Activated CD4-positive, alpha-beta memory T cell treated with anti-CD3 and anti-CD28 coated beads for 36 hours (primary cell): ENCODE measurements at regions of chr11 and their contacts with region 1.

Region 1: DNA sequence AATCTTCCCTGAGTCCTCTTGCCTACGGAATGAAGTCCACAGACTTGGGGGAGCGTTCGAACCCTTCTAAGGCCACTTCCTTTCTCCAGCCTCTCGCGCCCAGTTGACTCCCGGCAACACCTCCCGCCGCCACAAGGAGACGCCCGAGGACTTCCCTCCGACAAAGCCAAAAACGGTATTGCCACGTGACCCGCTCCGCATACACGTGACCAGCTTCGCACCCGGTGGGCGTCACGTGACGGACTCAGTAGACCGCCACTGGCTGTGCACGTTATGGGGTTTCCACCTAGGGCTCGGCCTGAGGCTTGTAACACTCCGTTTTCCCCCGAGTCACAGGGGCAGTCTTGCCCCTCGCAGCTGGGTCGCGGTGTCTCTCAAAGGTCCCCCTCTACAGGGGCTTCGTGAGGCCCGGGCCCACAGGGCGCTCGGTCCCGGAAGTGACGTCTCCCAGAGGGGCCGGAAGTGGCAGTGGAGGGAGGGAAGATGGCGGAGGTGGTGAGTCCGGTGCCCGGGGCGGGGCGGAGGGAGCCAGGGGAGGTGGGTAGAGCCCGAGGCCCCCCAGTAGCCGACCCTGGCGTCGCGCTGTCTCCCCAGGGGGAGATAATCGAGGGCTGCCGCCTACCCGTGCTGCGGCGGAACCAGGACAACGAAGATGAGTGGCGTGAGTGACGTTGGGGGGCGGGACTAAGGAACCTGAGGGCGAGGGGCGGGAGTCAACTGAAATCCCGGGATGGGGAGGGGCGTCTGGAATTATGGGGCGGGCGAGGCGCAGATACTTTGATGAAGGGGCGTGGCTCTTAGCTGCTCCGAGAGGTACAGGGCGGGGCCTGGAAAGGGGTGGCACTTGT is at the start of gene KAT5:
- DNase-seq: peak; percentile 99
- H3K4me3 Mint-ChIP-seq: peak within 1 kb of the TSS; percentile 90
- H3K27ac Mint-ChIP-seq: peak within 1 kb of the TSS; percentile 97
- H3K4me1 Mint-ChIP-seq: peaks cover 27% of the 10 kb centered on the region
- H3K27me3 Mint-ChIP-seq: no peaks in the 10 kb centered on the region
- total RNA-seq, gene KAT5: 55.9 to 61.6 TPM

Region 2: DNA sequence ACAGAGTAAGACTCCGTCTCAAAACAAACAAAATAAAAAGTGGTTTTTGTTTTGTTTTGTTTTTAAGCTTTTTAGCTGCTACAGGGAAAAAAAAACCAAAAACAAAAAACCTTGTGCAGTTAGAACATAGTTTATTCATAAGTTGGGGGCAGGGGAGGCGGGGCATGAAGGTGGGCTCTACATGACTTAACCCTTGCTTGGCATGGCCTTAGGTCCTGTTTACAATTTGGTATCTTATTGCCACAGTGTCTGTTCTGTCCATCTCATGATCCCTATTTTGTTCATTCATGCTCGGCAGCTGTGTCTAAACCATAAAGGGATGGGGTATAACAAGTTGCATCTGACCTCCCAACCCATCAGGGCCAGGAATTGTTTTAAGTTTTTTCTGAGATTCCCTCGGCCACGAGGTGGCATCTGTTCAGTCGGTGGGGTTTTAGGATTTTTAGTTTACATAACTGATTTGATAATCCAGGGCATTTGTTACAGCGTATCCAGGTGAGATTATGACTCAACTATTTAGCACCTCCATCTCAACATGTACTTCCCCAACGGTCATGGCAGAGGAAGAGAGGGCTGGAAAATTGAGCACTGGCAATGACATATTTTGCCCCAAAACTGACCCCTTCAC is 61.9 kb after region 1 on chr11:
- CTCF ChIA-PET with region 1: interaction called, 72 read pairs
- POLR2A ChIA-PET with region 1: no interaction called
- intact Hi-C with region 1: loop called (anchors 2 kb)
- DNase-seq: no peak
- H3K4me3 Mint-ChIP-seq: no peak overlapping the region
- H3K27ac Mint-ChIP-seq: no peak overlapping the region
- H3K4me1 Mint-ChIP-seq: peaks cover 15% of the 10 kb centered on the region
- H3K27me3 Mint-ChIP-seq: no peaks in the 10 kb centered on the region

Region 3: GRCh38 chr11:65850831-65851811 is 139.1 kb after region 1 on chr11:
- CTCF ChIA-PET with region 1: interaction called, 14 read pairs
- POLR2A ChIA-PET with region 1: no interaction called
- intact Hi-C with region 1: no loop called
- DNase-seq: peak; percentile 24
- H3K4me3 Mint-ChIP-seq: no peak overlapping the region
- H3K27ac Mint-ChIP-seq: no peak overlapping the region
- H3K4me1 Mint-ChIP-seq: peaks cover 22% of the 10 kb centered on the region
- H3K27me3 Mint-ChIP-seq: no peaks in the 10 kb centered on the region

Region 4: GRCh38 chr11:65988791-65989592 is 277.0 kb after region 1 on chr11:
- CTCF ChIA-PET with region 1: interaction called, 7 read pairs
- POLR2A ChIA-PET with region 1: no interaction called
- intact Hi-C with region 1: loop called (anchors 1 kb)
- DNase-seq: peak; percentile 95
- H3K4me3 Mint-ChIP-seq: no peak overlapping the region
- H3K27ac Mint-ChIP-seq: peak overlapping the region; percentile 74
- H3K4me1 Mint-ChIP-seq: peaks cover 4% of the 10 kb centered on the region
- H3K27me3 Mint-ChIP-seq: no peaks in the 10 kb centered on the region

Region 5: DNA sequence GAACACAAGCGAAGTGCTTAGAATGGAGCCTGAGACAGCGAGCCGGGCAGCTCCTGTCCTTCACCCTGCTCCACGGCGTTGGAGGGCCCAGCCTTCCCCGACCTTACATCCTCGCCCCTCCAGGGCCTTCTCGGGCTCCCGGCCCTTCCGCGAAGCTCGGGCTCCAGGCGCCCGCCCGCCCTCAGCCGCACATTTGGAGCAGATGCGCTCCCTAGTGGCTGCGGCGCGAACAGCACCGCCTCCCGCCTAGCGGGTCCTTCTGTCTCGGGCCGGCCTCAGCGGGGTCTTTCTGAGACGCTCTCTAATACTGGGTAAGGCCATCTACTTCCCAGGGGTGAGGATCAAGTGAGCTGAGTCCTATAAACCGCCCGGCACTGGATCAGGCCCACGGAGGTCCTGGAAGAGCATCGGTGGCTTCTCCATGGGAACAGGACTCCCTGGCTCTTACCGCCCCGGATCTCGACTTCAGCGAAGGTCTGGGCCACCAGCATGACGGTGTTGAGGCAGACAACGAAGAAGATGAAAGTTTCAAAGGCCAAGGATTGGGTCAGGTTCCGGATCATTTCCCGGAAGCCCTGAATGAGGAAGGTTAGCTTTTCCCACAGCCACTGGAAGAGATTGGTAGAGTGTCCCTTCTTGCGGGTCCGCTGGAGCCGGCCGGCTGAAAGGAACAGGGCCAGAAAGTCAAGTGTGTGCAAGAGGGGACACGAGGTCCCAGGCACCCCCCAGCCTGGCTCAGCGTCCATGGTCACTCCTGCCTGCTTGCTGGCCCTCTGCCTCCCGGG is 310.6 kb after region 1 on chr11:
- CTCF ChIA-PET with region 1: interaction called, 11 read pairs
- POLR2A ChIA-PET with region 1: interaction called, 3 read pairs
- intact Hi-C with region 1: no loop called
- DNase-seq: peak; percentile 85
- H3K4me3 Mint-ChIP-seq: peak overlapping the region; percentile 6
- H3K27ac Mint-ChIP-seq: no peak overlapping the region
- H3K4me1 Mint-ChIP-seq: peaks cover 17% of the 10 kb centered on the region
- H3K27me3 Mint-ChIP-seq: peaks cover 6% of the 10 kb centered on the region